Gastrocnemius medialis (tissue), 4 donors: ENCODE measurements at regions of chr6 and their contacts with region 1.

Region 1: GRCh38 chr6:170584181-170584953 is at the start of gene PDCD2:
- DNase-seq: peak; percentile 88 to 89
- ATAC-seq: peak; percentile 97 to 98
- H3K4me3 ChIP-seq: peak within 1 kb of the TSS; percentile 81 to 98 (median 86)
- H3K27ac ChIP-seq: peak within 1 kb of the TSS; percentile 77 to 95 (median 85)
- H3K4me1 ChIP-seq: peaks cover 15 to 16% of the 10 kb centered on the region in 2 donors
- H3K27me3 ChIP-seq: no peaks in the 10 kb centered on the region
- CTCF ChIP-seq: no peak
- POLR2A ChIP-seq: peak; percentile 43 to 78
- total RNA-seq, gene PDCD2: 61.5 to 113 (median 83.0) TPM

Region 2: GRCh38 chr6:170329321-170329720 is 255.0 kb before region 1 on chr6:
- in situ Hi-C with region 1: no loop called
- intact Hi-C with region 1: no loop called
- DNase-seq: no peak
- ATAC-seq: no peak
- H3K4me3 ChIP-seq: no peak overlapping the region
- H3K27ac ChIP-seq: no peak overlapping the region
- H3K4me1 ChIP-seq: no peaks in the 10 kb centered on the region
- H3K27me3 ChIP-seq: no peaks in the 10 kb centered on the region
- CTCF ChIP-seq: no peak
- POLR2A ChIP-seq: no peak

Region 3: DNA sequence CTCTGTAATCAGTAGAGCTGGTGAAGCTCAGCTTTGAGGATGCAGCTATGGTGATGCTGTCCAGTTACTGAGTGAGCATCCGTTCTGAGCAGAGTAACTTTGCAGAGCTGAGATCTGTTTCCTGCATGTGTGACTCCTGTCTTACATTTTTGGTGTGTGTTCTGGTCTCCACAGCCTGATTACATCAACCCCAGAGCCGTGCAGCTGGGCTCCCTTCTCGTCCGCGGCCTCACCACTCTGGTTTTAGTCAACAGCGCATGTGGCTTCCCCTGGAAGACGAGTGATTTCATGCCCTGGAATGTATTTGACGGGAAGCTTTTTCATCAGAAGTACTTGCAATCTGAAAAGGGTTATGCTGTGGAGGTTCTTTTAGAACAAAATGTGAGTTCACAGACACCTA is 196.3 kb before region 1 on chr6:
- in situ Hi-C with region 1: no loop called
- intact Hi-C with region 1: no loop called
- DNase-seq: no peak
- ATAC-seq: no peak
- H3K4me3 ChIP-seq: no peak overlapping the region
- H3K27ac ChIP-seq: no peak overlapping the region
- H3K4me1 ChIP-seq: peaks cover 5 to 7% of the 10 kb centered on the region in 2 donors
- H3K27me3 ChIP-seq: no peaks in the 10 kb centered on the region
- CTCF ChIP-seq: no peak
- POLR2A ChIP-seq: no peak

Region 4: GRCh38 chr6:170554013-170554795 is 30.2 kb before region 1 on chr6 and contains the start of gene TBP:
- in situ Hi-C with region 1: no loop called
- intact Hi-C with region 1: loop called (anchors 1 kb)
- DNase-seq: peak; percentile 98 to 99
- ATAC-seq: peak; percentile 91 to 92
- H3K4me3 ChIP-seq: peak within 1 kb of the TSS; percentile 75 to 95 (median 80)
- H3K27ac ChIP-seq: peak within 1 kb of the TSS; percentile 93 to 98 (median 94)
- H3K4me1 ChIP-seq: peaks cover 45 to 51% of the 10 kb centered on the region in 2 donors
- H3K27me3 ChIP-seq: no peaks in the 10 kb centered on the region
- CTCF ChIP-seq: no peak
- POLR2A ChIP-seq: peak; percentile 37 to 71
- total RNA-seq, gene TBP: 9.7 to 17.3 (median 15.3) TPM